ENCODE measurements at regions of chr14 and their contacts with region 1.

Region 1: DNA sequence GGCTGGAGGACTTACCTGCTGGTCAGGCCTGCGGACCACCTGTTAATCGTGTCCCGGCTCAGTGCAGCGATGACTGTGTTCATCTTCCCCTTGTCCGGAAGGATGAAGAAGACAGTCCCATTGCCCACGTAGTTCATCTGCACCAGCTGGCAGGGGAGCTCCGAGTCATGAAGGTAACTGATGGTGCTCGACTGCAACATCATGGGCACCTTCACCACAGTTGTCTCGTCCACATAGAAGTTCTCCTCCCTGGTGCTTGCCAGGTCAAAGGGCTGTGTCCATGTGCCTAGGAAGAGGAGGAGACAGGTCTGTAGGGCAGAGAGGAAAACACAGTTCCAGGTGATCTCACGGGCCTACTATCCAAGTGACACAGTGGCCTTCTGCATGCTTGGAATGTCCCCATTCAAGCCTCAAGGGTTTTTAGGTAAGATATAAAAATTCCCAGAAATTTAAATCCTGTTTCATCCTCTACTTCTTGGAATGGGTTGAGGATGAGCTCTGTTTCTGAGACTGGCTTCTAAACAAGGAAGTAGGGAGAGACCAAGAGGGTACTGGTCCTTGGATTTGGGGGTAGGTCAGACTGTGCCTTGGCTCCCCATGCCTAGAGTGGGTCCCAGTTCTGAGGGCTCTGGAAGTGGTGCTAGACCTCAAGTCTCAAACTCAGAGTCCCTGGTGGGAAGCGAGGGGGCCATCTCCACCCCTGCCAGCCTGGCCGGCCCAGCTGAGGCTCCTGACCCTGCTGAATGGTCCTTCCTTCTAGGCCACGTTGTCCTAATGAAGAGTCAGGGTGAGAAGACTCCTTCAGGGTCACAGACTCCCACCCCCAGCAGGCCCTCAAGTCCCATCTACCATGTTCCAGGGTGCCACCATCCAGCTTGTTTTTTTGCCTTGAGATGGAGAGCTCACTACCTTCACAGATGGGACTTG is 13.2 kb downstream of the SERPINA6 start:
- DNase-seq: no peak
- ATAC-seq: no peak
- H3K4me3 ChIP-seq: no peak overlapping the region
- H3K27ac ChIP-seq: no peak overlapping the region
- H3K4me1 ChIP-seq: no peaks in the 10 kb centered on the region
- H3K27me3 ChIP-seq: no peaks in the 10 kb centered on the region

Region 2: GRCh38 chr14:94282991-94283723 is 26.8 kb before region 1 on chr14:
- intact Hi-C with region 1: loop called in 1 of 2 experiments (anchors 1 kb)
- DNase-seq: no peak
- ATAC-seq: no peak
- H3K4me3 ChIP-seq: no peak overlapping the region
- H3K27ac ChIP-seq: no peak overlapping the region
- H3K4me1 ChIP-seq: no peaks in the 10 kb centered on the region
- H3K27me3 ChIP-seq: no peaks in the 10 kb centered on the region

Region 3: DNA sequence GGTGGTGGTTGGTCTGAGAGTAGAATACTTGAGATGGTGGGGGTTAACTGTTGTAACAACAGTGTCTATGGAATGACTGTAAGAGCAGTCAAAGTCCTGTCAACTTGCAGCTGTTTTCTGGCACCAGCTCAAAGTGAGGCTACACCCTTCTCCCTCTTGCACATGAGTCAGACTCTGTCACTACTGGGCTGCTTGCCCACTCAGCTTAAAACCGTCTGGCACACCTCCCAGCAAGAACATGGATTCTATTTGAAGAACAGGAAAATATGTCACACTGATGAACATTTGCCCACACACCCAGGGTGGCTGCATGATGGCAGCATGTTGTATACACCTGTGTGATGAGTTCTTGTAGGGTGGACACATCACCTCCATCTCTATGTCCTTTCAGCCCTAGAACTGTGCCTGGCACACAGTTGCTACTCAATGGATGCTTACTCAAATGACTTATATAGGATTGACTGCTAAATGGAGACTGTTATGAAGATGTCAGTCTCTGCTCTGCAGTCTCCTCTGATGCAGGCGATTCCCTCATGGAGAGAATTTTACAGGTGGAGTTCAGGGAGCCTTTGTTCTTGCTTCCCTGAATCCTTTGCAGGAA is 32.5 kb after region 1 on chr14:
- intact Hi-C with region 1: no loop called
- DNase-seq: peak; percentile 90 to 94
- ATAC-seq: peak; percentile 81
- H3K4me3 ChIP-seq: no peak overlapping the region
- H3K27ac ChIP-seq: no peak overlapping the region
- H3K4me1 ChIP-seq: no peaks in the 10 kb centered on the region
- H3K27me3 ChIP-seq: no peaks in the 10 kb centered on the region

Region 4: DNA sequence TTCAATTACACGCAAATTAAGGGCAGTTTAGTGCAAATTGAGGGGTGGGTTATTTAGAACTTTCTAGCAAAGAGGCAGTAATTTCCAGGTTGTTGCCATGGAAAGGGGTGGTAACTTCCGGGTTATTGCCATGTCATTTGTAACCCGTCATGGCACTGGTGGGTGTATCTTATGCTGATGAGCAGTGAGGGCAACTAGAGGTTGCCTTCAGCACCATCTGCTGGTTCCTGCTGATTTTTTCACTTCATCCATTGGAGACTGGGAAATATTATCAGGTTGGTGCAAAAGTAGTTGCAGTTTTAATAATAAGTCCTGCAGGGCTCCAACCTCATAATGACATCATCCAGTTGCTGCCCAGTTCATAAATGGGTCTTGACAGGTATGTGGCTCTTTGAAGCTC is 226.8 kb after region 1 on chr14:
- intact Hi-C with region 1: no loop called
- DNase-seq: no peak
- ATAC-seq: no peak
- H3K4me3 ChIP-seq: no peak overlapping the region
- H3K27ac ChIP-seq: no peak overlapping the region
- H3K4me1 ChIP-seq: no peaks in the 10 kb centered on the region
- H3K27me3 ChIP-seq: peaks cover 0 to 1% of the 10 kb centered on the region in 2 donors